ENCODE measurements at regions of chr1 and their contacts with region 1.

Region 1: GRCh38 chr1:6409053-6409452 is 10.7 kb downstream of the HES2 start:
- DNase-seq: no peak
- H3K4me3 ChIP-seq: no peak overlapping the region
- H3K27ac ChIP-seq: no peak overlapping the region
- H3K4me1 ChIP-seq: no peaks in the 10 kb centered on the region
- H3K27me3 ChIP-seq: peaks cover 2% of the 10 kb centered on the region
- CTCF ChIP-seq: no peak
- POLR2A ChIP-seq: no peak

Region 2: DNA sequence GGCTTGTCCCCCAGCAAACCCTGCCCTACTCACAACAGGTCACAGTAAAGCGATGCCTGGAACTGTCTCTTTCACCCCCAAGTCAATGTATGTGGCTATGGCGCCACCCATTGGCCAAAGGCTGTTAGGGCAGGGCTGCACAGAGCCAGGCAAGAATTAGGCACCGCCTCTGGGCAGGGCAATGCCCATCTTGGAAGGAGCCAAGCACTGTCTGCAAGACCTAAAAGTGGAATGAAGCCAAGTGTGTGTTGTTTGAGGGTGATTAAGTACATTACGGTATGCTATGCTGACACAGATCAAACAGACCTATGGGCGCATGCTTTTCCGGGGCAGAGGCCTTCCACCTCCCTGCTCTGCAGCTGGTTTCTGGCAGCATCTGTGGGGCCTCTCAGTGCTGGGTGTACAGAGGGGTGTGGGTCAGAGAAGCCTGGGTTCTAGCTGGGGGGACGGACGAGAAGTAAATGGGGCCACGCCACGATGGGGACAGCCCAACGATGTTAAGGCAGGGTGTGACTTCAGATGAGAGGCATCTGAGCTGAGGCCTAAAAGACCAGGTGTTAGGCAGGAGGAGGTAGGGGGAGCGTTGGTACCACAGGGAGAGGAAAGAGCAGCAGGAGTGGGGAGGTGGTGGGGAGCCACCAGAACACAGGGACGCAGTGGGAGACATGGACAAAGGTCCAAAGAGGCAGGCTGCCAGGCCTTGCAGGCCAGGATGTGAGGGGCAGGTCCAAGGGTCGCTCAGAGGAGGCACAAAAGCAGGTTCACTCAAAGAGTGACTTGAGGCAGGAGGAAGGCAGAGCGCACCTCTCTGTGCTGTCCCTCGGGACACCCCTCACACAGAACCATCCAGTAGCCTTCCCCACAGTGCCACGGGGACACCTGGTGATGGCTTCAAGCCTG is 65.3 kb before region 1 on chr1:
- intact Hi-C with region 1: loop called in 1 of 2 experiments (anchors 5 kb)
- DNase-seq: peak; percentile 61 to 89 (median 65)
- H3K4me3 ChIP-seq: no peak overlapping the region
- H3K27ac ChIP-seq: no peak overlapping the region
- H3K4me1 ChIP-seq: no peaks in the 10 kb centered on the region
- H3K27me3 ChIP-seq: no peaks in the 10 kb centered on the region
- CTCF ChIP-seq: peak; percentile 64 to 91 (median 86)
- POLR2A ChIP-seq: no peak

Region 3: GRCh38 chr1:6359216-6360116 is 49.6 kb before region 1 on chr1:
- intact Hi-C with region 1: loop called in 1 of 2 experiments (anchors 5 kb)
- DNase-seq: peak; percentile 55 to 94 (median 88)
- H3K4me3 ChIP-seq: no peak overlapping the region
- H3K27ac ChIP-seq: peak overlapping the region; percentile 74 to 92 (median 87)
- H3K4me1 ChIP-seq: peaks cover 15 to 33% of the 10 kb centered on the region in 2 donors
- H3K27me3 ChIP-seq: no peaks in the 10 kb centered on the region
- CTCF ChIP-seq: no peak
- POLR2A ChIP-seq: peak in 1 of 2 donors; percentile 49

Region 4: DNA sequence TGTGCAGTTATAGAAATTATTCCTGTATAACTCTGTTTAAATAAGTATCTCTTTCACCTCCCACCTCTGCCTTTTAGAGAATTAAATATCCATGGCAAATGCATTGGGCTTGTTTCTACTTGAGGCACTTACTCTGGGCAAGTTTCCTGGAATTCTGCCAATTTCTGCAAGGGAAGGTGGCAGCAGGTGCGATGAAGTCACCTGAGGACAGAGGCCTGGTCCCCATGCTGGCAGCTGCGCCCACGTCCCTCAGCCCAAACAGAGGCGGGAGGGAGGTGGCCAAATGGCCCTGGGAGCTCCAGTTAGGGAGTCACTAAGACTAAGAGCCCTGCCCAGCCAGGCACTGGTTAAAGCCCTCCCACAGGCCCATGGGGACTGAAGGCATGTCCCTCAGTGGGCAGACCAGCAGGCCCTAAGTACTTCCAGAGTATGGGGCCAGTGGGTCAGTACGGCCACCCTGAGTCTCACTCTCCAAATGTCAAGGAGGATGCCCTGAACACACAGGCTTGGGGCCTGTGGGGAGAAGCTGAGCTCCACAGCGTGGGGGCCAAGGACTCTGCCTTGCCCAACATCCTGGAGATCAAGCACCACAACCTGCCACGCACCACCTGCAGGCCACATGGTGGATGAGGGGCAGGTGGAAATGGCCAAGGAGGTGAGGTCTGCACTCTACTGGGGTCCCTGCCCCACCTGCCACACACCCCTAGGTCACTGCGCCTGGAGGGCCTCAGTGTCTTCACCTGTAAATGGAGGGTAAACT is 34.9 kb before region 1 on chr1:
- intact Hi-C with region 1: loop called (anchors 5 kb)
- DNase-seq: no peak
- H3K4me3 ChIP-seq: no peak overlapping the region
- H3K27ac ChIP-seq: no peak overlapping the region
- H3K4me1 ChIP-seq: no peaks in the 10 kb centered on the region
- H3K27me3 ChIP-seq: no peaks in the 10 kb centered on the region
- CTCF ChIP-seq: no peak
- POLR2A ChIP-seq: no peak

Region 5: GRCh38 chr1:6489799-6490180 is 80.7 kb after region 1 on chr1:
- intact Hi-C with region 1: no loop called
- DNase-seq: peak; percentile 65 to 84 (median 75)
- H3K4me3 ChIP-seq: peak overlapping the region in 3 of 4 donors; percentile 10 to 86 (median 64)
- H3K27ac ChIP-seq: no peak overlapping the region
- H3K4me1 ChIP-seq: peaks cover 16 to 48% of the 10 kb centered on the region in 2 donors
- H3K27me3 ChIP-seq: no peaks in the 10 kb centered on the region
- CTCF ChIP-seq: peak; percentile 62 to 95 (median 82)
- POLR2A ChIP-seq: no peak

Measured in adrenal gland (tissue), 19 donors.